PC-3 (cell line): ENCODE measurements at regions of chr6 and their contacts with region 1.

Region 1: GRCh38 chr6:108609276-108609769 is 48.6 kb downstream of the FOXO3 start:
- DNase-seq: peak; percentile 81
- ATAC-seq: peak; percentile 99
- H3K4me3 ChIP-seq: no peak overlapping the region
- H3K27ac ChIP-seq: peak overlapping the region; percentile 85
- H3K4me1 ChIP-seq: peaks cover 24% of the 10 kb centered on the region
- H3K27me3 ChIP-seq: no peaks in the 10 kb centered on the region
- CTCF ChIP-seq: no peak

Region 2: DNA sequence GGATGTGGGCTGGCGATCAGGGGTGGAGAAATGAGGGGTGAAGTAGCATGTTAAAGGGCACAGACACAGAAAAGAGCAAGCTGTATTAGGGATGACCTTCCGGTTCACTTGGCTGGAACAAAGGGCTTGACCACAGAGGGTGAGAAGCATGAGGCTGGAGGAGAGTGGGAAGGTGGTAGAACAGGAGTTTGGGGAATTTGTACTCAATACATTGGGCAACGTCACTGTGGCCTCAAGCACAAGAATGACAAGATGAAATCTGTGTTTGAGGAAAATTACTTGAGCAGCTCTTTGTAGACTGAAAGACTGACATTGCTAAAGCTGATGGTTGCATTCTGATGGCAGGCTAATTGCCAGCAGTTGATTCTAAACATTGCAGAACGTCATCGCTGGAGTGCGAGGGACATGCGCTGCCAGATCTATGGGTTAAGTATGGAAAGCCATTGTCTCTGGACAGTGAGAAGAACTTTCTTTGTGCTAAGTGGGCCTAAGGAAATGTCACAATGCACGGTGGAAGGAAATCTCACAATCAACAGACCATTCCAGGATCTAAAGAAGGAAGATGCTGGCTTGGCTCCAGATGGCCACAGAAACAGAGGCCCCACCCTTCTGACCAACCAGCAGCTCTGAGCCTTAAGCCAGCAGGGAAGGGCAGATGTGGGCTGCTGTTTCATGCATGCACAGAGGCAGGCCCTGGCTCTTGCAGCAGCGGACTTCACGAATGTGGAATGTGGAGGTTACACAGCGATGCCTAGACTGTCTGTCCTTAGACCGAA is 963.3 kb before region 1 on chr6:
- CTCF ChIA-PET with region 1: no interaction called
- POLR2A ChIA-PET with region 1: no interaction called
- intact Hi-C with region 1: no loop called
- DNase-seq: no peak
- ATAC-seq: no peak
- H3K4me3 ChIP-seq: no peak overlapping the region
- H3K27ac ChIP-seq: no peak overlapping the region
- H3K4me1 ChIP-seq: peaks cover 8% of the 10 kb centered on the region
- H3K27me3 ChIP-seq: no peaks in the 10 kb centered on the region
- CTCF ChIP-seq: no peak

Region 3: DNA sequence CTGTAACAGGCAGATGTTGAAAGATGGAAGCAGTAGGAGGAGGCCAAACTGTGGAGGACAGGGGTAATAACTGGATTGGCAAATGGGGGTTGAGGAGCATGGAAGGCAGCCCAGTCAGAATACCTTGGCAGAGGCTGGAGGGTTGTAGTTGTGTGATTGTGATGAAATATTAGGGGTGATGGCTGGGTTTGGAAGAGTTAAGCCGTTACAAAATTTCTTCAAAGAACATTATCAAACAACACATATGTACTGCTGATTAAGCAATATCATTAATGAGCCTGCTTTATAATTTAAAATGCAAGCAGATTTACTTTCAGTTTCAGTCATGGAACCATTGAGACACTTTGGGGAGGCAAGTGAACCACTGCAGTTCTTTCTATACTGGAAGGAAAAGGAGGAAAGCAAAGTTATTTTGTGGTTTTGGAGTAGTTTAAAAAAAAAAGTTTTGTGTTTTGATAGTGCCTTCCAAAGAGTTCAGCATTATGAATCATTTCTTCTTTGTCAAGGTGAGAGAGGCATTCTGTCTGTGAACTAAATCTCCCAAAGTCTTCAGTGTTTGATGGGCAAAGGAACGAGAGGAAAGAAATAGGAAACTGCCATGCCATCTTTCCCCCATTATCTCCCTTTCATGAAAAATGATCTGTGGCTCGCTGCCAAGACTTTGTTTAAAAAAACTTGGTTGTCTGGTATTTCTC is 27.9 kb before region 1 on chr6:
- CTCF ChIA-PET with region 1: no interaction called
- POLR2A ChIA-PET with region 1: no interaction called
- intact Hi-C with region 1: no loop called
- DNase-seq: peak; percentile 33
- ATAC-seq: peak; percentile 15; the same call in 1 of the 2 replicates
- H3K4me3 ChIP-seq: no peak overlapping the region
- H3K27ac ChIP-seq: no peak overlapping the region
- H3K4me1 ChIP-seq: peaks cover 22% of the 10 kb centered on the region
- H3K27me3 ChIP-seq: no peaks in the 10 kb centered on the region
- CTCF ChIP-seq: no peak

Region 4: DNA sequence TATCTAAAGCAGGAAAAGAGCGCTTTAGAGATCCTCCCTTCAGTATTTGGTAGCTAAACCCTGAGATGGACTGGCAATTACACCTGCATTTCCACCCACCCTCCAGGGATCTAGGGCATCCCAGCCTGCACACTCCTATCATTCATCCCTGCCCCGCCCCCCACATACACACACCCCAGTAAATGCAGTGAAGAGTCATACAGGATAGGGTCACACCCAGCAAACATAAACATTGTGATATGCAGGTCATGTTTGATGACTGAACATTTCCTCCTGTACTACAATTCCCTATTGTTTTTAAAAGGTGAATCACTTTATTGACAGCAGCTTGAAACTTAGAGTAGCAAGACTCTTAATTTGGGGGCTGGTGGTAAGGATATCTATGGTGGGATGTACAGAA is 64.3 kb after region 1 on chr6:
- CTCF ChIA-PET with region 1: no interaction called
- POLR2A ChIA-PET with region 1: no interaction called
- intact Hi-C with region 1: loop called (anchors 5 kb)
- DNase-seq: peak; percentile 78
- ATAC-seq: peak; percentile 94
- H3K4me3 ChIP-seq: no peak overlapping the region
- H3K27ac ChIP-seq: peak overlapping the region; percentile 87
- H3K4me1 ChIP-seq: peaks cover 41% of the 10 kb centered on the region
- H3K27me3 ChIP-seq: no peaks in the 10 kb centered on the region
- CTCF ChIP-seq: no peak